ENCODE measurements at regions of chr9 and their contacts with region 1.

Region 1: DNA sequence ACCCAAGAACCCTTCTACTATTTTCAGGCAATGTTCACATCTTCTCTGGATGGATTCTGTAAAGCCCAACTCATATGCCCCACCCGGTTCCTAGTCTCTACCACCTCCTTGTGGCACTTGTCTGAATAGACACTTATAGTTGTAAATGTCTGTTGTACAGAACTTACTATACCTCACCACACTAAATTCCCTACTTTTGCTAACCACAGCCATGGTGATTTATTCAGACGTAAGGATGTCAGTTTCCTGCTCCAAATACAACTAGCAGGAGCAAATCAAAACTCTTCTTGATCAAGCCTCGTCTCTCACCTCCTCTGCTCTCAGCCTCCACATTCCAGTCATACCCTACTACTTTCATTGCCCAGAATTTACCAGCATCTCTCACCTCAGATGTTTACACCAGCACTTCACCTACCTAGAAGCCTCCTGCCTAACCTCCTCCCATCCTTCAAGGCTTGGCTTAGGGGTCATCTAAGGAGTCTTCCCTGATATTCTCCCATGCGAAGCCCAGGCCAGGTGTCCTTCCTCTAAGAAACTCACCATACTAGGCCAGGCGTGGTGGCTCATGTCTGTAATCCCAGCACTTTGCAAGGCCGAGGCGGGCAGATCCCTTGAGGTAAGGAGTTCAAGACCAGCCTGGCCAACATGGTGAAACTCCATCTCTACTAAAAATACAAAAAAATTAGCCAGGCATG is 75.5 kb downstream of the MAPKAP1 start:
- DNase-seq: no peak
- ATAC-seq: peak in 3 of 4 donors; percentile 74 to 78 (median 75)
- H3K4me3 ChIP-seq: no peak overlapping the region
- H3K27ac ChIP-seq: peak overlapping the region in 1 of 12 donors; percentile 80
- H3K4me1 ChIP-seq: peaks cover 0 to 75% (median 22%) of the 10 kb centered on the region in 12 donors
- H3K27me3 ChIP-seq: no peaks in the 10 kb centered on the region
- CTCF ChIP-seq: peak; percentile 34 to 69 (median 60)
- POLR2A ChIP-seq: no peak

Region 2: GRCh38 chr9:123679322-123679987 is 1952.1 kb before region 1 on chr9:
- intact Hi-C with region 1: no loop called
- DNase-seq: no peak
- ATAC-seq: peak in 3 of 4 donors; percentile 22 to 33 (median 26)
- H3K4me3 ChIP-seq: no peak overlapping the region
- H3K27ac ChIP-seq: no peak overlapping the region
- H3K4me1 ChIP-seq: peaks cover 0 to 23% (median 11%) of the 10 kb centered on the region in 12 donors
- H3K27me3 ChIP-seq: no peaks in the 10 kb centered on the region
- CTCF ChIP-seq: no peak
- POLR2A ChIP-seq: no peak

Region 3: GRCh38 chr9:125428060-125428901 is 203.3 kb before region 1 on chr9:
- intact Hi-C with region 1: loop called in 3 of 10 experiments (anchors 5 to 10 kb)
- DNase-seq: peak in 2 of 5 donors; percentile 33 to 50
- ATAC-seq: peak in 3 of 4 donors; percentile 40 to 74 (median 64)
- H3K4me3 ChIP-seq: no peak overlapping the region
- H3K27ac ChIP-seq: no peak overlapping the region
- H3K4me1 ChIP-seq: no peaks in the 10 kb centered on the region
- H3K27me3 ChIP-seq: no peaks in the 10 kb centered on the region
- CTCF ChIP-seq: peak; percentile 28 to 57 (median 40)
- POLR2A ChIP-seq: no peak

Region 4: GRCh38 chr9:125484350-125485282 is 146.9 kb before region 1 on chr9:
- intact Hi-C with region 1: loop called in 1 of 10 experiments (anchors 10 kb)
- DNase-seq: no peak
- ATAC-seq: peak in 3 of 4 donors; percentile 34 to 57 (median 40)
- H3K4me3 ChIP-seq: no peak overlapping the region
- H3K27ac ChIP-seq: peak overlapping the region; percentile 39 to 81 (median 74)
- H3K4me1 ChIP-seq: peaks cover 0 to 33% (median 10%) of the 10 kb centered on the region in 12 donors
- H3K27me3 ChIP-seq: no peaks in the 10 kb centered on the region
- CTCF ChIP-seq: no peak
- POLR2A ChIP-seq: no peak